ENCODE measurements at regions of chr2 and their contacts with region 1.

Region 1: DNA sequence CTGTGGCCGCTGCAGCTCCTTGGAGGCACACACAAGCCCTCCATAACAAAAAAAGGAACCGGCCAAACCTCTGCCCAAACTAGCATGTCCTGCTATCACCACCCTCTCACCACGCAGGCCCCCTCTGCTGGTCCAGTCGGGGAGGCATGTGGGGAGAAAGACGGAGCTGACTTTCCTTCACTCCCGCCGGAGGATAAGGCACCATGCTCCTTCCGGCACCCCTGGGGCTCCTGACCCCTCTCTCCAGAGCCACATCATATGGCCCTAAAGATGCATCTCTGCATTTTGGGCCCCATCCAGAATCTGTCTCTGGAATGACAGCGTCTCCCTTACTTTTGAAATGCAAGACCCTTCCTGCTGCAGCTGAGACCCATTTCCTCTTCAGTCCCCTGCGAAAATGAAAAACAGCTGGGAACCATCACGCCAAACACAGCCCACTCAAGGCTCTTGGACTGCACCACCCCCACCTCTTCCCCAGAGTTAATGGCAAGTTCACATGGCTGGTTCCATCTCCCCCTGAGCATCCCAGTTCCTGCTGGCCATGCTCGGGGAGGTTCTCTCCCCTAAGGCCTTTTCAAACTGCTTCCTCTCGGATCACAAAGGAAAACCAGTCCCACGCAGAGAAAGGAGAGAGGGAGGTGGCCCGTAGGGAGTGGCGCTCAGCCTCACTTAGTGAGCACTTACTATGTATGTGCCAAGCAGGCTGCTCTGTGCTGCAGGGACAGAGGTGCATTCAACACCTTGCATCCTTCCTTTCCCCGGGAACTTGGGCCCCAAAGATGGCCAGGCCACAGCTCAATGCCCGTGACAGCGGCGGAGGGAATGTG is 35.2 kb upstream of the MLPH start:
- DNase-seq: no peak
- H3K4me3 ChIP-seq: no peak overlapping the region
- H3K27ac ChIP-seq: peak overlapping the region in 1 of 2 donors; percentile 20
- H3K4me1 ChIP-seq: peaks cover 3% of the 10 kb centered on the region
- H3K27me3 ChIP-seq: no peaks in the 10 kb centered on the region
- CTCF ChIP-seq: peak in 1 of 4 experiments; percentile 6
- POLR2A ChIP-seq: no peak

Region 2: DNA sequence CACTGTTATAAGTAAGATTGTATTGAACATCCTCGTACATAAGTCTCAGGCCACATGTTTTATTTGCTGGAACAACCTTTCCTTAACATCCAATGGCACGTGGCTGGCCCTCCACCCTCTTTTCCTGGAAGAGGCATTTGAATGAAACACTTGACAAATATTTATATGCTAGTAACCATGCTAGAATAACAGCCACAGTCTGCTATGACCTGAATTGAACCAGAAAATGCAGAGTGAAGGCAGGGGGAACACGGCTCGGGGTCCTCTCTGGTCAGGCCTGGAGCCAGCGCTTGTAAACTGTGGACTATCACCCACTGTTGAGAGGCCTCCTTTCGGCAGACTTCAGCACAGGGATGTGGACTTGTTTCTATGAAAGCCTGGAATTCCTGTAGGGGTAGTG is 564.3 kb before region 1 on chr2:
- intact Hi-C with region 1: no loop called
- DNase-seq: peak; percentile 17
- H3K4me3 ChIP-seq: no peak overlapping the region
- H3K27ac ChIP-seq: no peak overlapping the region
- H3K4me1 ChIP-seq: no peaks in the 10 kb centered on the region
- H3K27me3 ChIP-seq: no peaks in the 10 kb centered on the region
- CTCF ChIP-seq: no peak
- POLR2A ChIP-seq: no peak

Region 3: DNA sequence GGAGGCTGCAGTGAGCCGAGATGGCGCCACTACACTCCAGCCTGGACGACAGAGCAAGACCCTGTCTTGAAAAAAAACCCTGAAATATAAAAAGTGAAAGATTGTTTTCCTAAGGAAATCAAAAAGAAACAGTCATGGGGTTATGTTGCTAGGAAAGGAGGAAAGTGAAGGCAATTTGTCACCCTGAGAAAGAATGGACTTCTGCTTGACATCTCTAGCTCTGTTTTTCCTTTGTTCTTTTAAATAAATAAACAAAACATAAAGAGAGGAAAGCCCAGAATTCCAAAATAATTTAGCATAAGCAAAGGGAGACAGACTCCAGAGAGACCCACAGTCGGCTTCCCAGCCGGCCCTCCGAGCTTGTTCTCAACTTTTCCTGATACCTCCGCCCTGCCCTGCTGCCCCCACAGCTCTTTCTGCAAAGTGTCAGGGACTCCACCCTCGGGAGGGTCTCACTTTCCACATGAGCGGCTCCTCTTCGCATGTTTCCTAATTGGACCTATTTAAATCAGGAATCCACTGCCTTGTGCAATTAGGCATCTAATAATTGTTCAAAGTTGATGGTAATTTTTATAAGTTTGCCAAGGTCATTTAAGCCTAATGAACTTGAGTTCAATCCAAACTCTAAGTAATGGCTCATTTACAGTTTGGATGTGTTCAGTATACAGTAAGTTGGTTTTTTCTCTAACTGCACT is 415.9 kb before region 1 on chr2:
- intact Hi-C with region 1: no loop called
- DNase-seq: no peak
- H3K4me3 ChIP-seq: no peak overlapping the region
- H3K27ac ChIP-seq: no peak overlapping the region
- H3K4me1 ChIP-seq: no peaks in the 10 kb centered on the region
- H3K27me3 ChIP-seq: no peaks in the 10 kb centered on the region
- CTCF ChIP-seq: no peak
- POLR2A ChIP-seq: no peak

Region 4: GRCh38 chr2:237383991-237384671 is 67.7 kb before region 1 on chr2:
- intact Hi-C with region 1: no loop called
- DNase-seq: no peak
- H3K4me3 ChIP-seq: no peak overlapping the region
- H3K27ac ChIP-seq: no peak overlapping the region
- H3K4me1 ChIP-seq: no peaks in the 10 kb centered on the region
- H3K27me3 ChIP-seq: no peaks in the 10 kb centered on the region
- CTCF ChIP-seq: no peak
- POLR2A ChIP-seq: no peak

Region 5: DNA sequence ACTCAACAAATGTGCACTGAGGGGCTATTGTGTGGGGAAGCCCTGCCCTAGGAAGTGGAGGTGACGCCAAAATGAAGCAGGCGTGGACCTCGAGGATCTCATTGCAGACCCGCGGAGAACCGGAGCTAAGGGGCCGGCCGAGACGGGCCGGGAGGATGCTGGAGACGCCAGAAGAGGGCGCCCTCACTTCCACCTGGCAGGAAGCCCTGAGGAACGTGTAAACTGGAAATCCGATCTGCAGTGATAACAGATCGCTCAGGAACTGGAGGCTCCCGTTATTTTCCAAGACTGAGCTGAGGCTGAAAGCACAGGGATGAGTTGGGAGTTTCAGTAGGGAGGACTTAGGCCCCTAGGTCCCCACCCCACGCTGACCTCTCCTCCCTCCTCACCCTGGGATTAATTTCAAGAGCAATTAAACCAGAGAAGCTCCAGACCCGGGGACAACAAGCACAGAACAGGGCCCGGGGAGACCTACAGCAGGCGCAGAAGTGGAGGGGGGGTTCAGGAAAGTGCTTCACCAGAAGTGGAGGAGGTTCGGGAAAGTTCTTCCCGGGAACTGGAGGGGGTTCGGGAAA is 30.2 kb before region 1 on chr2:
- intact Hi-C with region 1: loop called (anchors 5 kb)
- DNase-seq: peak; percentile 68
- H3K4me3 ChIP-seq: no peak overlapping the region
- H3K27ac ChIP-seq: peak overlapping the region in 1 of 2 donors; percentile 43
- H3K4me1 ChIP-seq: peaks cover 6% of the 10 kb centered on the region
- H3K27me3 ChIP-seq: no peaks in the 10 kb centered on the region
- CTCF ChIP-seq: peak; percentile 70 to 81 (median 79)
- POLR2A ChIP-seq: no peak

Region 6: GRCh38 chr2:237471440-237472183 is 19.8 kb after region 1 on chr2:
- intact Hi-C with region 1: no loop called
- DNase-seq: peak; percentile 53
- H3K4me3 ChIP-seq: no peak overlapping the region
- H3K27ac ChIP-seq: peak overlapping the region in 1 of 2 donors; percentile 63
- H3K4me1 ChIP-seq: peaks cover 2% of the 10 kb centered on the region
- H3K27me3 ChIP-seq: no peaks in the 10 kb centered on the region
- CTCF ChIP-seq: peak; percentile 30 to 88 (median 70)
- POLR2A ChIP-seq: no peak

Measured in prostate gland (tissue), 2 donors.